ENCODE measurements at regions of chr5 and their contacts with region 1.

Region 1: GRCh38 chr5:154520861-154521453 is 42.9 kb upstream of the HAND1 start:
- DNase-seq: peak; percentile 76
- H3K4me3 Mint-ChIP-seq: no peak overlapping the region
- H3K27ac Mint-ChIP-seq: no peak overlapping the region
- H3K4me1 Mint-ChIP-seq: peaks cover 19% of the 10 kb centered on the region
- H3K27me3 Mint-ChIP-seq: peaks cover 27% of the 10 kb centered on the region
- CTCF ChIP-seq: peak; percentile 86

Region 2: DNA sequence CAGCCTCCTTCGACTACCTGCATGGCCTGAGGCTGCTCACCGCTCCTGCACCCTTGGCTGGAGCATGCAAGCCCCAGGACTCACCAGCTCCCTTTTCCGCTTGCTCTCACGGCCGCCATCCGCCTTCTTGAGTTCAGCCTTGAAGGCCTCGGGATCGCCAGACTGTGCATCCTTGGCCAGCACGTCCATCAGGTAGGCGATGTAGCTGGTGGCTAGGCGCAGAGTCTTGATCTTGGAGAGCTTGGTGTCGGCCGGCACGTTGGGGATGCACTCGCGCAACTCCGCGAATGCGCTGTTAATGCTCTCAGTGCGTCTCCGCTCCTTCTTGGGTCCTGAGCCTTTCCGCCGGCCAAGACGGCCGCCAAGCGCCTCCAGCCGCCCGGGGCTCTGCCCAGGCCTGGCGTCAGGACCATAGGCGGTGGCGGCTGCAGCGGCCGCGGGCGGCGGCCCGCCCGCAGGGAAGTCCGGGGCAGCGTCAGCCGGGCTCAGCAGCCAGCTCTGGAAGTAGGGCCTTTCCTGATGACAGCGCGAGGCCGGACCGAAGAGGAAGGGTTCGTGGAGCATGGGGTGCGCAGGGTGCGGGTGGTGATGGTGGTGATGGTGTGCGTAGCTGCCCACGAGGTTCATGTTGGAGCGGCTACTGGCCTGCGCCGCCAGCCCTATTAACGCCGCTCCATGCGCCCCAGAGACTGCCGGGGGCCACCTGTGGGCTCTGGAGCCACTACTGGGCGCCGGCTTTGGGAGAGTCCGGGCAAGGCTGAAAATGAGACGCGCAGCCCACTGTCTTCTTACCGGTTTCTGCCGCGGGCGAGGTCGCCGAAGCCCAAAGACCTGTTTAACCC is 43.4 kb before region 1 on chr5:
- CTCF ChIA-PET with region 1: interaction called, 11 read pairs
- POLR2A ChIA-PET with region 1: no interaction called
- intact Hi-C with region 1: no loop called
- DNase-seq: no peak
- H3K4me3 Mint-ChIP-seq: no peak overlapping the region
- H3K27ac Mint-ChIP-seq: no peak overlapping the region
- H3K4me1 Mint-ChIP-seq: peaks cover 4% of the 10 kb centered on the region
- H3K27me3 Mint-ChIP-seq: peaks cover 90% of the 10 kb centered on the region
- CTCF ChIP-seq: no peak

Region 3: GRCh38 chr5:154541553-154541952 is 20.6 kb after region 1 on chr5:
- CTCF ChIA-PET with region 1: interaction called, 77 read pairs
- POLR2A ChIA-PET with region 1: interaction called, 3 read pairs
- intact Hi-C with region 1: no loop called
- DNase-seq: no peak
- H3K4me3 Mint-ChIP-seq: no peak overlapping the region
- H3K27ac Mint-ChIP-seq: no peak overlapping the region
- H3K4me1 Mint-ChIP-seq: peaks cover 15% of the 10 kb centered on the region
- H3K27me3 Mint-ChIP-seq: peaks cover 73% of the 10 kb centered on the region
- CTCF ChIP-seq: no peak

Region 4: GRCh38 chr5:154575546-154576428 is 54.8 kb after region 1 on chr5:
- CTCF ChIA-PET with region 1: interaction called, 34 read pairs
- POLR2A ChIA-PET with region 1: no interaction called
- intact Hi-C with region 1: no loop called
- DNase-seq: peak; percentile 23
- H3K4me3 Mint-ChIP-seq: no peak overlapping the region
- H3K27ac Mint-ChIP-seq: no peak overlapping the region
- H3K4me1 Mint-ChIP-seq: peaks cover 6% of the 10 kb centered on the region
- H3K27me3 Mint-ChIP-seq: peaks cover 21% of the 10 kb centered on the region
- CTCF ChIP-seq: peak; percentile 30

Region 5: DNA sequence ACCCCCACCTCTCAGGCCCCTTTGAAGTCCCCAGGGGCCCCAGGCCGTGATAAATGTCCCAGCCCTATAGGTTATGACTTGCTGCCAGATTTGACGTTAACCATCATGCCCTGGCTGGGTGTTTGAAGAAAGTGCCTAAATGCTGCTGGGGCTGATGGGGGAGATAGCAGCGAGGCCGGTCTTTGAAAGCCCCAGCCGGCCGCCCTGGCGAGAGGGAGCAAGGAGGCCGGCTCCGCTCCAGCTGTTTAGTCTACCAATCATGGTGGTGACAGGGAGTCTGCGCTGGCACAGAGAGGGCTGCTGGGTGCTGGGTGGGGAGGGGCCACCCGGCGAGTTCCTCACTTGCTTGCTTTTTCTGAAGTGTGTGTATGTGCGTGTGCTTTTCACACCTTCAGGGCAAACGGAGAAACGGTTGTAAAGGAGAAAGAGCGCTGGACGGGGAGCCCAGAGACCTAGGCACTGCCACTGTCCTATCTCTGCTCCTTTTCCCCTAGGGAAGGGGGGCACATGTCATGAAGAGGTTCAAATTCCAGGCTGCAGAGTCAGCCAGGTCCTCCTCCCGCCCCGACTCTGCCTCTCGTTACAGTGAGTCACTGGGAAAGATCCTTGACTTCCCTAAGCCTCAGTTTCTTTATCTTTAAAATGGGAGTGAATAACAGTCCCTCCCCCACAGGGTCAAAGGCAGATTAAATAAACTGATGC is 83.2 kb after region 1 on chr5:
- CTCF ChIA-PET with region 1: interaction called, 275 read pairs
- POLR2A ChIA-PET with region 1: no interaction called
- intact Hi-C with region 1: no loop called
- DNase-seq: no peak
- H3K4me3 Mint-ChIP-seq: no peak overlapping the region
- H3K27ac Mint-ChIP-seq: no peak overlapping the region
- H3K4me1 Mint-ChIP-seq: peaks cover 10% of the 10 kb centered on the region
- H3K27me3 Mint-ChIP-seq: peaks cover 19% of the 10 kb centered on the region
- CTCF ChIP-seq: no peak

Region 6: DNA sequence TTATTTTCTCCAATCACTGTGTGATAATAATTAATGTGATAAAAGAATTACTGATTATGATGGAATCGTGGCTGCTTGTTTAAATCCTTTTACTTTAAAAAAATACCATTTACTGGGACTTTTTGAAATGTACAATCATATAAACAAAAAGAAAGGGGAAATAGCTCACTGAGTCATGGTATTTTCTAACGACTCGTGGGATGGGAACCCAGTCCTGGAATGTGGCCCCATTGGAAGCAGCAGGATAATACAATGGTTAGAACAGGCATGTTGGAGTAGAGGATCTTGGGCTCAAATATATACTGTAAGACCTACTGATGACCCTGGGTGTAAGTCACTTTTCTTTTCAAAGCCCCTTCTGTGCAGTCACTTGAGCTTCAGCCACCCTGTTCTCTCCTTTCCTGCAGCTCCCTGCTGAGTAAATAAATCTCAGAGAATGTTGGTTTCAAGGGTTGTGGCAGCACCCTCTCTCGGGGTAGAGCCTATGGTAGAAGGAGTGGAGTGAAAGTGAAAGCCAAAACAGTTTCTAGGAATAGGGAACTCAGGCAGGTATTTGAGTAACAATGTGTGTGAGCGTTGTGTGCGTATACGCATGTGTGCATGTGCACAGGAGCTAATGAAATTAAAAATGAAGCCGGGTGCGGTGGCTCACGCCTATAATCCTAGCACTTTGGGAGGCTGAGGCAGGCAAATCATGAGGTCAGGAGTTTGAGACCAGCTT is 193.5 kb after region 1 on chr5:
- CTCF ChIA-PET with region 1: no interaction called
- POLR2A ChIA-PET with region 1: no interaction called
- intact Hi-C with region 1: no loop called
- DNase-seq: peak; percentile 16
- H3K4me3 Mint-ChIP-seq: peak overlapping the region; percentile 5
- H3K27ac Mint-ChIP-seq: peak overlapping the region; percentile 73
- H3K4me1 Mint-ChIP-seq: peaks cover 19% of the 10 kb centered on the region
- H3K27me3 Mint-ChIP-seq: no peaks in the 10 kb centered on the region
- CTCF ChIP-seq: no peak

Measured in MCF 10A (cell line).